Posterior vena cava (tissue), 2 donors: ENCODE measurements at regions of chrX and their contacts with region 1.

Region 1: DNA sequence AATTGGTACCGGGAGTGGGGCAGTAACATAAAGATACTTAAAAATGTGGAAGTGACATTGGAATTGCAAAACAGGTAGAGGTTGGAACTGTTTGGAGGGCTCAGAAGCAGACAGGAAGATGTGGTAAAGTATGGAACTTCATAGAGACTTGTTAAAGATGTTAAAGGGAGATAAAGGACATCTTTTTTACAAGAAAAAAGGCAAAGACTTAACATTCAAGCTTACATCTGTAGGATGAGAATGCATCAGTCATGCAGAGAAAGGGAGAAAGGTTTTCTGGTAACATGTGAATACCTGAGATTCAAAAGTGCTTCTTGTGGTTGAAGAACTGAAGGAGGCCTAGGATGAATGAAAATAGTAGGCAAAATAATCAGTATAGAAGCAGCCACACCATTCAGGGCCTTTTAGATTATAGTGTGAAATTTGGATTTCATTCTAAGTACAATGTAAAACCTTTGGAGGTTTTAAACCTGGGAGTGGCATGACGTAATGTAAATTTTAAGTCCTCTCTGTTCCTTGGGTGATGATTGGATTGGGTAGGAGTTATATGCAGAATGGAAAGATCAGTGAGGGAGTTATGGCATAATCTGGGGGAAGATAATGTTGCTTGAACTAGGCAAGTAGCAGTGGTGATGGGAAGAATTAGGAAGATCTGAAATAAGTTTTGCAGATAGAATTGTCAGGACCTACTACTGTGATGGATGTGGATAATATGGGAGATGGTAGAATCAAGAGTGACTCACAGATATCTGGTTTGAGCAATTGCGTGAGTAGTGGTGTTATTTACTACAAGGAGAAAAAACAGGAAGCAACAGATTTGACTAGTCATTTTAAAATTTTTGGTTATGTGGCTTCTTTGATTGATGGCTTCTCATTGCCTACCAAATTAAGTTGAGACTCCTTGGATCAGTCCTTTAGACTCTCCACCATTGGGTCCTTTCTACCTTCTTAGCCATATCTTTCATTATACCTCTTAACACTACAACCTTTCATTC is 138.7 kb downstream of the VSIG4 start:
- DNase-seq: no peak

Region 2: GRCh38 chrX:65961714-65962113 is 60.6 kb after region 1 on chrX:
- intact Hi-C with region 1: loop called in 1 of 2 experiments (anchors 2 kb)
- DNase-seq: no peak